ENCODE measurements at regions of chr19 and their contacts with region 1.

Region 1: DNA sequence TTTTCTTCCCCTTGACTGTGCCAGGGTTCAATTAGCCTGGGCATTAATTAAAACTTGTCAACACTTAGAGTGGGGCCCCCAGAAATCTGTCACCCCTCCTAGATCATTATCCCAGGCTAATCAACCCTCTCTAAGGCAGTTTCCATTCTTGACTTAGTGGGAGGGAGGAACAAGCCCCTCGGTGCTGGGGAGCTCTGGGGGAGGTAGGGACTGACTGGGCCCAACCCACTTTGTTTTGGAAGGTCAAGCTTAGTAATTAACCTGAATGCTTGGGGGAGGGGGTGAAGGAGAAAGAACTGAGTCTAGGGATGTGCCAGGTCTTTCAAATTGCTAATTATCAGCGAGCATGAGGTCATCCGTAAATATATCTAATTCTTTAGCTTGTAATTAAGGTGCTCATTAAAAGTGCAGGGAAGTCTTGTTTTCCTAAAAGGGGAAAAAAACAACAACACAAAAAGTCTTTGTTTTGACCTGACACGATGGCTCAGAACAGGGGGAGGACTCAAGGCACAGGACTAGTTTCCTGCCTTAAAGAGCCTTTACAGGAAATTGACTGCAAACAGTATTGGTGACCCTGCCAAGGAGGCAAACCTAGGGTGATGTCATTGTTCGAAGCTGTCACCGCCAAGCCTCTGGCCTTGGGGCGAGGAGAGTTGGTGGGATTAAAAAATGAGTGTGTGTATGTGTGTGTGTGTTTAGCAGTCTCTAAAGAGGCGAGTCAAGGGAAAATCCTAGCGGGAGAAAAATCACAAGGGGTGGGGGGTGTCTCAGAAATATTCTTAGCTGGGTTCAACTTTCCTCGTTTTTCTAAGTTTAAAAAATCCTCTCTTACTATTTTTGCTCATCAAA is 19.4 kb downstream of the ACTN4 start:
- DNase-seq: peak; percentile 74
- H3K4me3 ChIP-seq: no peak overlapping the region
- H3K27ac ChIP-seq: peak overlapping the region; percentile 84
- H3K4me1 ChIP-seq: peaks cover 97% of the 10 kb centered on the region
- H3K27me3 ChIP-seq: no peaks in the 10 kb centered on the region
- CTCF ChIP-seq: no peak

Region 2: DNA sequence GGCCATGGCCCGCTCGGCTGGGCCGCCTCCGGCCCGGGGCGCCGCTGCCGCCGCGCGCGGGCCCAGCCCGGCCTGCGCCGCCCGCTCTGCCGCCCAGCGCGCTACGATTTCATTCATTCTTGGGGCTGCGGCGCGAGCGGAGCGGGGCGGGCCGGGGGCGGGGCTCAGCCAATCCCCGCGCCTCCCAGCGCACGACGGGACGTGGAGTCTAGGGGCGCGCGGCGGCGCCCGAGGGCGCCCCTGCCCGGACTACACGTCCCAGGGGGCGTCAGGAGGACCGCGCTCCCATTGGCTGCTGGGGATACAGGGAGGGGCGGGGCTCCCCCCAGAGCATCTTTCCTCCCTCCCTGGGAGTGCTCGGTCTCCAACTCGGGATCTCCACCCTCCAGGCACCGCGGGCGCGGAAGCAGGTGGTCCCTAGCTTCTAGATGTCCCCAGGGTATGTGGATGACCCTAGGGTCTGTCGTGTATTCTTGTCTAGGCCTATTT is 437.3 kb before region 1 on chr19:
- CTCF ChIA-PET with region 1: no interaction called
- dilution Hi-C with region 1: no loop called
- in situ Hi-C with region 1: no loop called
- intact Hi-C with region 1: no loop called
- DNase-seq: peak; percentile 79
- H3K4me3 ChIP-seq: no peak overlapping the region
- H3K27ac ChIP-seq: no peak overlapping the region
- H3K4me1 ChIP-seq: peaks cover 14% of the 10 kb centered on the region
- H3K27me3 ChIP-seq: peaks cover 12% of the 10 kb centered on the region
- CTCF ChIP-seq: no peak

Region 3: GRCh38 chr19:38683393-38684080 is 16.6 kb after region 1 on chr19:
- CTCF ChIA-PET with region 1: interaction called, 12 read pairs
- dilution Hi-C with region 1: no loop called
- in situ Hi-C with region 1: no loop called
- intact Hi-C with region 1: no loop called
- DNase-seq: peak; percentile 99
- H3K4me3 ChIP-seq: no peak overlapping the region
- H3K27ac ChIP-seq: peak overlapping the region; percentile 99
- H3K4me1 ChIP-seq: peaks cover 76% of the 10 kb centered on the region
- H3K27me3 ChIP-seq: no peaks in the 10 kb centered on the region
- CTCF ChIP-seq: no peak

Measured in mammary epithelial cell (primary cell).